Esophagus squamous epithelium (tissue), 5 donors: ENCODE measurements at regions of chr3 and their contacts with region 1.

Region 1: GRCh38 chr3:141011232-141011996 is 39.7 kb upstream of the SPSB4 start:
- DNase-seq: no peak
- H3K4me3 ChIP-seq: no peak overlapping the region
- H3K27ac ChIP-seq: no peak overlapping the region
- H3K4me1 ChIP-seq: peaks cover 0 to 9% (median 0%) of the 10 kb centered on the region in 3 donors
- H3K27me3 ChIP-seq: peaks cover 0 to 39% (median 0%) of the 10 kb centered on the region in 4 donors
- CTCF ChIP-seq: peak in 5 of 6 experiments; percentile 47 to 70 (median 61)
- POLR2A ChIP-seq: no peak

Region 2: DNA sequence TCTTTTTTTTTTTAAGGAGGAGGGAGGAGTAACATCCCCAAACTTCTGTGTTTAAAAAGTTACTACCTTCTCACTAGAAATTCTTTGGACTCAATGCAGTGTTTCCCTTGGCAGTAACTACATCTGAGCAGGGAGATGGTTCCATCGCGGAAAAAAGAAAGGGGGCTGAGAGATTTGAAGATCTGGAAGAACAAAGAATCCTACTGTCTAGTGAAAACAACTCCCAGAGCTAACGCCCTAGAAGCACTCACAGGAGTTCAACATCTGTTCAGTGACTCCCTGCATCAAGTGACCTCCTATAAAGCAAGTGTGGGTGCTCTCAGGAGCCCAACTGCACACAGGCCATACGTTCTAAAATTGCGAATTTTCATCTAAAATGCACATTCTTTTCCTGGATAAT is 153.4 kb after region 1 on chr3:
- intact Hi-C with region 1: no loop called
- DNase-seq: no peak
- H3K4me3 ChIP-seq: no peak overlapping the region
- H3K27ac ChIP-seq: no peak overlapping the region
- H3K4me1 ChIP-seq: no peaks in the 10 kb centered on the region
- H3K27me3 ChIP-seq: peaks cover 0 to 7% (median 0%) of the 10 kb centered on the region in 4 donors
- CTCF ChIP-seq: no peak
- POLR2A ChIP-seq: no peak

Region 3: GRCh38 chr3:141184430-141184829 is 173.0 kb after region 1 on chr3:
- intact Hi-C with region 1: loop called (anchors 10 kb)
- DNase-seq: no peak
- H3K4me3 ChIP-seq: no peak overlapping the region
- H3K27ac ChIP-seq: no peak overlapping the region
- H3K4me1 ChIP-seq: no peaks in the 10 kb centered on the region
- H3K27me3 ChIP-seq: peaks cover 0 to 18% (median 0%) of the 10 kb centered on the region in 4 donors
- CTCF ChIP-seq: no peak
- POLR2A ChIP-seq: no peak

Region 4: GRCh38 chr3:141360888-141361598 is 349.6 kb after region 1 on chr3:
- intact Hi-C with region 1: no loop called
- DNase-seq: no peak
- H3K4me3 ChIP-seq: peak overlapping the region in 3 of 4 donors; percentile 11 to 42 (median 18)
- H3K27ac ChIP-seq: peak overlapping the region in 3 of 4 donors; percentile 29 to 59 (median 53)
- H3K4me1 ChIP-seq: peaks cover 0 to 15% (median 3%) of the 10 kb centered on the region in 3 donors
- H3K27me3 ChIP-seq: peaks cover 0 to 82% (median 5%) of the 10 kb centered on the region in 4 donors
- CTCF ChIP-seq: peak; percentile 64 to 80 (median 76)
- POLR2A ChIP-seq: no peak